ENCODE measurements at regions of chr9 and their contacts with region 1.

Region 1: DNA sequence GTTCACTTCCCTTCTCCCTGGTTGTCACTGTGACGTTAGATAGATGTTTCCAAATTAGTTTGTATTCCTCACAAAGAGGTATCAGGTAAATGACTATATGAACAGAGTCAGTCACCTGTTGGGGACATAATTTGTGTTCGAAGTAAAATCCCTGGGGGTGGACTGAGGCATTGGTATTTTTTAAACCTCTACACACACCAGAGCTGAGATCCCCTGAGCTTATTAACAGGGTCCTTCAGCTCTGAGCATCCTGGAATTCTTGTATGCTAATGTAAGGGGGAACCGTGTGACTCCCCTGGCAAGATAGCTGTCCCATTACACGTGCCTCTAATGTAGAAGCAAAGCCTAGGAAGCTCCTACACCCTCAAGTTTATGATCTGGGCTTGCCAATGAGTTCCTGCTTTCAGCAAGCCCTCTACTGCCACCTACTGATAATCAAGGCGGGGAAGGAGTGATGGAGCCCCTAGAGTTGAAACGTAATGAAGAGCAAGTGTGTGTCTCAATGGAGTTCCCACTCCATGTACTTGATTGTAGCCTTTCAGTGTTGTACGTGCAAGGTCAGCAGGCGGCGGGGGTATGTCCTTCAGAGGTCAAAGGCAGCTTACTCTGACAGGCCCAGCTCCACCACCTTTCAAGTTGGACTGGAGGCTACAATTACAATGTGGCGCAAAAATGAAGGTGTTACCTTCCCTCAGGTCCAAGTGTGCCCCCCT is 14.4 kb downstream of the PRKACG start:
- DNase-seq: no peak
- ATAC-seq: peak; percentile 95
- H3K4me3 ChIP-seq: no peak overlapping the region
- H3K27ac ChIP-seq: no peak overlapping the region
- H3K4me1 ChIP-seq: no peaks in the 10 kb centered on the region
- H3K27me3 ChIP-seq: no peaks in the 10 kb centered on the region
- CTCF ChIP-seq: peak; percentile 79

Region 2: GRCh38 chr9:68584189-68585033 is 415.1 kb before region 1 on chr9:
- intact Hi-C with region 1: loop called (anchors 5 kb)
- DNase-seq: peak; percentile 82
- ATAC-seq: peak; percentile 100
- H3K4me3 ChIP-seq: no peak overlapping the region
- H3K27ac ChIP-seq: no peak overlapping the region
- H3K4me1 ChIP-seq: no peaks in the 10 kb centered on the region
- H3K27me3 ChIP-seq: no peaks in the 10 kb centered on the region
- CTCF ChIP-seq: peak; percentile 99

Region 3: DNA sequence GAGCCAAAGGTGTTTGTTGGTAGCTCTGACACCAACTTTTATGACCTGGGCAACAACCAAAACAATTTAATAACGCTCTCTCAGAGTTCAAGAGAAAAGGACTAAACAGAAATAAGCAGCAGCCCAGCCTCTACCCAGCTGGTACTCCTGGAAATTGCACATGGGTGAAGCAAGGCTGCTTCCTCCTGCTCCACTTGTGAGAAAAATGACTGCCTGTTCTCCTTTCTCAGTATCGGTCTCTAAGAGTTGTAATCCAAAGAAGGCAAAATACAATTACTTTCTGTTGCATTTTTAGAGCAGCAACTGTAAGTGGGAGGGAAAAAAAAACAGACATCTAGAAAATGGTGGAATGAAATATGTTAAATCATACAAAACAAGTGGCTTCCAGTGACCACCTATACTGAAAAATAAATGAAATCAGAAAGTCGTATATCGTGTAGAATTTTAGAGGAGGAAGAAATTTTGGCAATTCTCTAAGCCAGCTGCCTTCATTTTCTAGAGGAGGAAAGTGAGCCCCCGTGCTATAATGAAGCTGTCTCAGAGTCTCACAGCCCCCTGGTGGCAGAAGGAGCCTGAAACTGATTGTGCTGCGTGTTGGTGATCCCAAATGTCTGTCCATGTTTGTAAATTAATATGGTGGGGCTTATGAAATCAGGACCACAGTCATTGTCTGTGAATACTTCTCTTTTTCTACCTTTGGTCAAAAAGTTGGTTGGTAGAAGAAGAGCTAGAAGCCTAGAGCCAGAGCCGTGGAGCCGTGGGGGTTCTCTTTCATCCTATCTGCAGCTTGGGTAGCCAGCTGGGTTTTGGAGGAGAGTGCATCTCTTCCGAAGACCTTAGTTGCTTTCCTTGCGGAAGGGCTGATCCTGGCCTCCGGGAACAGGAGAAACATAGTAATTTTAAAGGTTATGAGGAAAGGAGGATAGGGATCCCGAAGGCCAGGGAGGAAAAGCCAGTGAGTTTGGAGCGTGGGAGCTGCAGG is 154.6 kb before region 1 on chr9:
- intact Hi-C with region 1: loop called (anchors 10 kb)
- DNase-seq: no peak
- ATAC-seq: peak; percentile 72
- H3K4me3 ChIP-seq: no peak overlapping the region
- H3K27ac ChIP-seq: no peak overlapping the region
- H3K4me1 ChIP-seq: peaks cover 6% of the 10 kb centered on the region
- H3K27me3 ChIP-seq: no peaks in the 10 kb centered on the region
- CTCF ChIP-seq: peak; percentile 51

Region 4: GRCh38 chr9:68925175-68925574 is 74.4 kb before region 1 on chr9:
- intact Hi-C with region 1: no loop called
- DNase-seq: no peak
- ATAC-seq: no peak
- H3K4me3 ChIP-seq: no peak overlapping the region
- H3K27ac ChIP-seq: no peak overlapping the region
- H3K4me1 ChIP-seq: no peaks in the 10 kb centered on the region
- H3K27me3 ChIP-seq: no peaks in the 10 kb centered on the region
- CTCF ChIP-seq: no peak

Region 5: GRCh38 chr9:69223605-69224004 is 224.1 kb after region 1 on chr9:
- intact Hi-C with region 1: no loop called
- DNase-seq: no peak
- ATAC-seq: peak; percentile 95
- H3K4me3 ChIP-seq: no peak overlapping the region
- H3K27ac ChIP-seq: no peak overlapping the region
- H3K4me1 ChIP-seq: no peaks in the 10 kb centered on the region
- H3K27me3 ChIP-seq: no peaks in the 10 kb centered on the region
- CTCF ChIP-seq: peak; percentile 68

Measured in upper lobe of right lung (tissue), 1 donor.